ENCODE measurements at regions of chrX and their contacts with region 1.

Region 1: DNA sequence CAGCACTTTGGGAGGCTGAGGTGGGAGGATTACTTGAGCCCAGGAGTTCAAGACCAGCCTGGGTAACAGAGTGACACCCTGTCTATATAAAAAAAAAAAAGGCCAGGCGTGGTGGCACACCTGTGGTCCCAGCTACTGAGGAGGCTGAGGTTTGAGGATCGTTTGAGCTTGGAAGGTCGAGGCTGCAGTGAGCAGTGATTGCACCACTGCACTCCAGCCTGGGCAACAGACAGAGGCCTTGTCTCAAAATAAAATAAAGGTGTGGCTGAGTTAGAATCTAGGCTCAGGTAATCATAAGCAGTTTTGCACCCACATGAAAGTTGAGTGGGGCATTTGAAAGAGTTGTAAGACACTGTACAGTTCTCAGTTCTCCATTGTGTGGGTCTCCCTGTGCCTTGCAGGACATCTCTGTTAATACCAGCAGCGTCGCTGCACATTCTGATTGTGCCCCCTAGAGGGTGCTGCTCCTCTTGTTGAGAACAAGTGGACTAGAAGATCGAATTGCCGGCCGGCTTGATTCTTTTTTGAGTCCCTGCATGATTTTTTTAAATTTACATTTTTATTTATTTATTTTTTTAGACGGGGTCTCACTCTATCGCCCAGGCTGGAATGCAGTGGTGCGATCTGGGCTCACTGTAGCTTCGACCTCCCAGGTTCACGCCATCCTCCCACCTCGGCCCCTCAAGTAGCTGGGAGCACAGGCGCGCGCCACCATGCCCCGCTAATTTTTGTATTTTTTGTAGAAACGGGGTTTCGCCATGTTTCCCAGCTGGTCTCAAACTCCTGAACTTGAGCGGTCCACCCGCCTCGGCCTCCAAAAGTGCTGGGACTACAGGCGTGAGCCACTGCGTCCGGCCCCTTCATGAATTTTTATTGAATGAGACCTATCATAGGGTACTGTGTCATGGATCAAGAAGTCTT is 73.6 kb upstream of the RBMX start:
- DNase-seq: peak; percentile 69
- H3K4me3 ChIP-seq: no peak overlapping the region
- H3K27ac ChIP-seq: no peak overlapping the region
- H3K4me1 ChIP-seq: no peaks in the 10 kb centered on the region
- H3K27me3 ChIP-seq: no peaks in the 10 kb centered on the region
- CTCF ChIP-seq: peak in 3 of 4 experiments; percentile 7 to 44 (median 16)
- EP300 ChIP-seq: no peak
- POLR2A ChIP-seq: no peak

Region 2: GRCh38 chrX:137051978-137052642 is 98.0 kb after region 1 on chrX:
- intact Hi-C with region 1: loop called (anchors 2 kb)
- DNase-seq: peak; percentile 67
- H3K4me3 ChIP-seq: peak overlapping the region; percentile 8 to 47 (median 38)
- H3K27ac ChIP-seq: no peak overlapping the region
- H3K4me1 ChIP-seq: peaks cover 0 to 16% (median 5%) of the 10 kb centered on the region in 4 donors
- H3K27me3 ChIP-seq: no peaks in the 10 kb centered on the region
- CTCF ChIP-seq: peak; percentile 21 to 67 (median 46)
- EP300 ChIP-seq: no peak
- POLR2A ChIP-seq: no peak